Posterior vena cava (tissue), 2 donors: ENCODE measurements at regions of chr7 and their contacts with region 1.

Region 1: GRCh38 chr7:133452577-133452976 is 199.7 kb downstream of the EXOC4 start:
- DNase-seq: no peak

Region 2: DNA sequence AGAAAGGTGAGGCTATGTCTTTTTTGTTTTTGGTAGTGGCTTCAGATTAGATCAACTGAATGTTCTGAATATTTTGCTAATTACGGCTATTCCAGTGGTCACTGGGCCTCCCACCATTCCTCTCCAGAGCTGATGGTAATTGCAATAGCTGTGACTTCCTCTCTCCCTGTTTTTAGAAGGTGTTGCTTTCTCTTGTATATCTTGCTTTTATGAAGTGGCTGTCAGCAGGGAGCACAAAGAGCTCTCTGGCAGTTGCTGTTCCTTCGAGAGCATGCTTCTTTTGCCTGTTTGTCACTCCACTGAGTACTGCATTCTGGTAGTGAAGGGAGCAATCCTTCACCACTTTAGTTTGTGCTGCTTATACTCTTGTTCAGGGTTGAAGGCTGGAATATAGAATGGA is 66.4 kb before region 1 on chr7:
- intact Hi-C with region 1: loop called in 1 of 2 experiments (anchors 2 kb)
- DNase-seq: no peak